ENCODE measurements at regions of chr9 and their contacts with region 1.

Region 1: GRCh38 chr9:75378036-75378435 is 289.7 kb downstream of the OSTF1 start:
- DNase-seq: peak; percentile 84
- ATAC-seq: peak; percentile 85 to 99

Region 2: GRCh38 chr9:75644649-75645048 is 266.6 kb after region 1 on chr9:
- intact Hi-C with region 1: loop called in 1 of 2 experiments (anchors 10 kb)
- DNase-seq: no peak
- ATAC-seq: peak in 1 of 2 donors; percentile 15

Measured in left cardiac atrium (tissue), 4 donors.